Right cardiac atrium (tissue), 5 donors: ENCODE measurements at regions of chr3 and their contacts with region 1.

Region 1: DNA sequence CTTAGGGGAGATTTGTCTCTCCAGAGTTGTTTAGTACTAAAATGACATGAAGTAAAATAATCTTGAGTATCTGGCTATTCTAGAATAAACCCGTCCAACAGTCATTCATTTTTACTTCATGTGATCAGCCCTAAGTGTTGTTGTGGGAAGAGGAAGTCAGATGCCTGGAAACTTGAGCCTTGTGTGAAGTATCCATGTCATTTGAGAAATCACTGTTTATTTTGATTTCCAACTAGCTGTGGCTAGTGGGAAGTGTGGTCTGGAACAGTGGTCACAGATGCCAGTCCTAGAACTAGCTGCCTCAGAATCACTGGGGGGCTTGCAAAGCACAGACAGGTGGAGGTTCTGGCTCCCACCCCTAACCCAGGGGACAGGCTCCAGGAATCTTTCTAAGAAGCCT is 77.7 kb upstream of the LIMD1 start:
- DNase-seq: no peak
- ATAC-seq: no peak
- H3K4me3 ChIP-seq: no peak overlapping the region
- H3K27ac ChIP-seq: no peak overlapping the region
- H3K4me1 ChIP-seq: no peaks in the 10 kb centered on the region
- H3K27me3 ChIP-seq: no peaks in the 10 kb centered on the region

Region 2: GRCh38 chr3:45224824-45225464 is 291.9 kb before region 1 on chr3:
- intact Hi-C with region 1: loop called in 1 of 4 experiments (anchors 10 kb)
- DNase-seq: peak; percentile 72 to 89 (median 89)
- ATAC-seq: peak; percentile 79 to 82
- H3K4me3 ChIP-seq: peak overlapping the region; percentile 78
- H3K27ac ChIP-seq: no peak overlapping the region
- H3K4me1 ChIP-seq: no peaks in the 10 kb centered on the region
- H3K27me3 ChIP-seq: no peaks in the 10 kb centered on the region

Region 3: DNA sequence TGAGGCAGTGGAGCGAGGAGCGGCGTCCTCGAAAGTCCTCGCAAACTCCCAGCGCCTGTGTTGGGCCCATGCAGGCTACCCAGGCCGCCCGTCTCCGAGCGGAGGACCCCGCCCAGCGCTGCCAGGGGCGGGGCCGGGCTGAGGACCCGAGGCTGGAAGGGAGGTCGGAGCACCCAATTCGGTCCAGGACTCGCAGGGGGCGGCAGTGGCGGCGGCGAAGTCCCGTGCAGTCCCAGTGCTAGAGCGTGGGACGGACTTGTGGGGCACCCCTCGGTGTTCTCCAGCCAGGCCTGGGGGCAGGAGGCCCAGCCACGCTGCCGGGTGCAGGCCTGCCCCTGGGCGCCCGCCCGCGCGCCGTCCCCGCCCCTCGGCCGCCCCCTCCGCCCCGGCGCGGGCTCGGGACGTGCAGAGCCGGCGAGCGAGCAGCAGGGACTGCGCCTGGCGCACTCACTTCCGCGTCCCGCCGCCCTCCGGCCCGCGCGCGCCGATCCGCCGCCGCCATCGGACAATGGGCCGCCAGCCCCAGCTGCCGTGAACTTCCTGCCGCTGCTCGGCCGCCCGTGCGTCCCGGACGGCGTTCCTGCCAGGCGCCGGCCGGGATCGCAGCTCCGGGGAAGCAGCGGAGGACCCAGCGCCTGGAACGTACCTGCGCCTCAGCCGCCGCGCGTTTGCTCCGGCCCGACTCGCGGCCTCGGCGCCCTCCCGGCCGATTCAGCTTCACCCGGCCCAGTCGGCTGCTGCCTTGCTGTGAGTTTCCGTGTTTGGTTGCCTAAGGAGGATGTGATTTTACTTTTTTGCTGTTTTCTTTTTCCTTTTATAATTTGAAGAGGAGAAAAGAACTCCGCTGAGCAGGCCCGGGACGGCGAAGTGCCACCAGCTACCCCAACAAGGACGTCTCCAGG is 77.1 kb after region 1 on chr3:
- intact Hi-C with region 1: loop called in 1 of 4 experiments (anchors 10 kb)
- DNase-seq: peak; percentile 75 to 92 (median 90)
- ATAC-seq: peak; percentile 89
- H3K4me3 ChIP-seq: peak overlapping the region; percentile 62
- H3K27ac ChIP-seq: peak overlapping the region; percentile 76
- H3K4me1 ChIP-seq: peaks cover 25% of the 10 kb centered on the region
- H3K27me3 ChIP-seq: no peaks in the 10 kb centered on the region

Region 4: GRCh38 chr3:45656575-45657363 is 139.9 kb after region 1 on chr3:
- intact Hi-C with region 1: loop called (anchors 2 to 5 kb)
- DNase-seq: peak; percentile 94 to 96 (median 94)
- ATAC-seq: peak; percentile 88 to 92
- H3K4me3 ChIP-seq: no peak overlapping the region
- H3K27ac ChIP-seq: no peak overlapping the region
- H3K4me1 ChIP-seq: peaks cover 7% of the 10 kb centered on the region
- H3K27me3 ChIP-seq: no peaks in the 10 kb centered on the region

Region 5: GRCh38 chr3:45929042-45929679 is 412.3 kb after region 1 on chr3:
- intact Hi-C with region 1: loop called in 1 of 4 experiments (anchors 10 kb)
- DNase-seq: peak in 1 of 3 donors; percentile 65
- ATAC-seq: peak in 1 of 2 donors; percentile 41
- H3K4me3 ChIP-seq: no peak overlapping the region
- H3K27ac ChIP-seq: no peak overlapping the region
- H3K4me1 ChIP-seq: no peaks in the 10 kb centered on the region
- H3K27me3 ChIP-seq: no peaks in the 10 kb centered on the region